ENCODE measurements at regions of chr5 and their contacts with region 1.

Region 1: GRCh38 chr5:141992349-141992963 is 20.4 kb downstream of the GNPDA1 start:
- DNase-seq: peak; percentile 55 to 79 (median 58)
- ATAC-seq: peak; percentile 91
- H3K4me3 ChIP-seq: no peak overlapping the region
- H3K27ac ChIP-seq: no peak overlapping the region
- H3K4me1 ChIP-seq: no peaks in the 10 kb centered on the region
- H3K27me3 ChIP-seq: no peaks in the 10 kb centered on the region
- CTCF ChIP-seq: peak; percentile 58 to 66 (median 62); a peak in 5 of 6 replicates
- EP300 ChIP-seq: no peak
- POLR2A ChIP-seq: no peak
- RAD21 ChIP-seq: peak; percentile 52 to 69; a peak in 3 of 4 replicates

Region 2: DNA sequence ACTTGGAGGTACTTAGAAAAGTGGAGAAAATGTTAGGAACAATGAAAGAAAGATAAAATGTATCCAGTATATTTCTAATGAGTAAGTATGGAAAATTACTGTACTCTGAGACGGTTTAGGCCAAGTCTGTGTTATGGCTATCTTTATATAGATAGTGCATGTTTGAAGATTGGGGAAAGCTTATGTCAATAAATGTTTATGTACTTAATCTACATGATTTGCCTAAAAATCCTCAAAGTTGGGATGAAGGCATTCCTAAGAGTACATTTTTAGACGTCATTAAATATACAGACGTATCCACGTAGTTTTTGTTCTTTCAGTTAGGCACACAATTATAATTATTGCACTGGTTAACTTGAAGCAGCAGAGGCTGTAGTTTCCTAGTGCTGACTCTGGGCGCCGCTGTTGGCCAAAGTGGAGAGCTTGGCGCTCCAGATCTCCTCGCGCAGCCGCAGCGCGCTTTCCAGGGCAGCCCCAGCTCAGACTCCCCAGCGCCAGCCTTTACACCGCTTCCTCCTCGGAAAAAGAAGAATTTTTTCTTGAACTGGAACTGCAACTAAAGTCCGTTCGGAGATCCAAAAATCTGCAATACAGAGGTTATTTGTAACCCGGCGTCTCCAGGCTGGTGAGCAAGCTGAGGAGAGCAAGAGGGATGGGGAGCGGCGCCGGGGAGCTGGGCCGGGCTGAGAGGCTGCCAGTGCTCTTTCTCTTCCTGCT is 605.1 kb before region 1 on chr5 and contains the start of gene PCDHGB4:
- CTCF ChIA-PET with region 1: no interaction called
- POLR2A ChIA-PET with region 1: no interaction called
- in situ Hi-C with region 1: no loop called
- intact Hi-C with region 1: no loop called
- DNase-seq: peak in 1 of 4 experiments; percentile 12
- ATAC-seq: peak; percentile 81
- H3K4me3 ChIP-seq: no peak within 1 kb of the TSS
- H3K27ac ChIP-seq: no peak within 1 kb of the TSS
- H3K4me1 ChIP-seq: peaks cover 0 to 12% of the 10 kb centered on the region in 2 experiments; a peak in 2 of 5 replicates
- H3K27me3 ChIP-seq: peaks cover 6 to 37% of the 10 kb centered on the region in 2 experiments; a peak in 4 of 5 replicates
- CTCF ChIP-seq: peak; percentile 22 to 47 (median 42); a peak in 2 of 6 replicates
- EP300 ChIP-seq: no peak
- POLR2A ChIP-seq: no peak
- RAD21 ChIP-seq: peak in 1 of 2 experiments; percentile 31; a peak in 1 of 4 replicates
- polyA plus RNA-seq, gene PCDHGB4: not detected

Region 3: GRCh38 chr5:141976176-141976575 is 16.3 kb before region 1 on chr5:
- CTCF ChIA-PET with region 1: no interaction called
- POLR2A ChIA-PET with region 1: interaction called, 16 read pairs
- in situ Hi-C with region 1: no loop called
- intact Hi-C with region 1: no loop called
- DNase-seq: no peak
- ATAC-seq: no peak
- H3K4me3 ChIP-seq: no peak overlapping the region
- H3K27ac ChIP-seq: no peak overlapping the region
- H3K4me1 ChIP-seq: peaks cover 0 to under 1% of the 10 kb centered on the region in 2 experiments; a peak in 1 of 5 replicates
- H3K27me3 ChIP-seq: no peaks in the 10 kb centered on the region
- CTCF ChIP-seq: no peak
- EP300 ChIP-seq: no peak
- POLR2A ChIP-seq: no peak
- RAD21 ChIP-seq: no peak